ENCODE measurements at regions of chr11 and their contacts with region 1.

Region 1: GRCh38 chr11:111454561-111455192 is 57.5 kb downstream of the BTG4 start:
- DNase-seq: peak; percentile 85
- H3K4me3 ChIP-seq: no peak overlapping the region
- H3K27ac ChIP-seq: no peak overlapping the region
- H3K4me1 ChIP-seq: peaks cover 6% of the 10 kb centered on the region; the same call in 1 of the 2 replicates
- H3K27me3 ChIP-seq: no peaks in the 10 kb centered on the region

Region 2: GRCh38 chr11:111777094-111778046 is 322.7 kb after region 1 on chr11:
- in situ Hi-C with region 1: loop called (anchors 10 kb)
- DNase-seq: peak; percentile 87
- H3K4me3 ChIP-seq: no peak overlapping the region
- H3K27ac ChIP-seq: no peak overlapping the region
- H3K4me1 ChIP-seq: 0 out of 2 replicates have a peak, but pooled peaks cover 8% of the 10 kb centered on the region
- H3K27me3 ChIP-seq: no peaks in the 10 kb centered on the region